SK-N-SH (cell line): ENCODE measurements at regions of chr1 and their contacts with region 1.

Region 1: GRCh38 chr1:20472860-20473711 is 12.9 kb downstream of the CAMK2N1 start:
- DNase-seq: peak; percentile 78
- H3K4me3 ChIP-seq: no peak overlapping the region
- H3K27ac ChIP-seq: peak overlapping the region in 1 of 2 experiments; percentile 74; a peak in 2 of 4 replicates
- H3K4me1 ChIP-seq: peaks cover 0 to 38% of the 10 kb centered on the region in 2 experiments; a peak in 2 of 4 replicates
- H3K27me3 ChIP-seq: no peaks in the 10 kb centered on the region
- CTCF ChIP-seq: no peak
- EP300 ChIP-seq: no peak
- RAD21 ChIP-seq: no peak

Region 2: GRCh38 chr1:20348326-20348915 is 124.7 kb before region 1 on chr1:
- CTCF ChIA-PET with region 1: no interaction called
- POLR2A ChIA-PET with region 1: no interaction called
- DNase-seq: no peak
- H3K4me3 ChIP-seq: no peak overlapping the region
- H3K27ac ChIP-seq: no peak overlapping the region
- H3K4me1 ChIP-seq: peaks cover 0 to 9% of the 10 kb centered on the region in 2 experiments; a peak in 1 of 4 replicates
- H3K27me3 ChIP-seq: no peaks in the 10 kb centered on the region; the same call in 1 of the 2 replicates
- CTCF ChIP-seq: no peak
- EP300 ChIP-seq: no peak
- RAD21 ChIP-seq: no peak

Region 3: DNA sequence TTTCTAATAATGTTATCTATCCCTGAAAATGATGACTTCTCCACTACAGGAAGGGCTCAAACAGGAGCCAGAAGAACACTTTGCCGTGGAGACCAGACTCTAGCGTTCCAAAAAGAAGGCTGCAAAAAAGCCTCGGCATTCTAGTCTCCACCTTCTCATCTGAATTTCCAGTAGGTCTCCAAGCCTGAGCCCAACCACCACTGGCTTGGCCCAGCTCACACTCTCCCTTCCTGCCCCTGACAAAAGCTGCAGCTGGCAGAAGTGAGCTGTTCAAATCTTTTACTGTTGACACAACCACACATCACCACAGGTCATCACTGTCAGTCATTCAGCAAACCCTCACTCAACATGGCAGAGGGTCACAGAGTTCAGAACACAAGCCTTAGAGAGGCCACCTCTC is 56.4 kb before region 1 on chr1:
- CTCF ChIA-PET with region 1: no interaction called
- POLR2A ChIA-PET with region 1: no interaction called
- DNase-seq: no peak
- H3K4me3 ChIP-seq: no peak overlapping the region
- H3K27ac ChIP-seq: no peak overlapping the region
- H3K4me1 ChIP-seq: peaks cover 2 to 8% of the 10 kb centered on the region in 2 experiments; a peak in 3 of 4 replicates
- H3K27me3 ChIP-seq: no peaks in the 10 kb centered on the region
- CTCF ChIP-seq: no peak
- EP300 ChIP-seq: no peak
- RAD21 ChIP-seq: no peak

Region 4: GRCh38 chr1:20485527-20486456 is 12.7 kb after region 1 on chr1 and contains the start of gene CAMK2N1:
- CTCF ChIA-PET with region 1: interaction called, 19 read pairs
- POLR2A ChIA-PET with region 1: interaction called, 14 read pairs
- DNase-seq: peak; percentile 89
- H3K4me3 ChIP-seq: peak within 1 kb of the TSS; percentile 68 to 74
- H3K27ac ChIP-seq: peak within 1 kb of the TSS; percentile 56 to 88
- H3K4me1 ChIP-seq: peaks cover 0 to 25% of the 10 kb centered on the region in 2 experiments; a peak in 2 of 4 replicates
- H3K27me3 ChIP-seq: 0 out of 2 replicates have a peak, but pooled peaks cover 3% of the 10 kb centered on the region
- CTCF ChIP-seq: no peak
- EP300 ChIP-seq: no peak
- RAD21 ChIP-seq: no peak
- polyA plus RNA-seq, gene CAMK2N1: 2.8 and 5.3 TPM in 2 replicates

Region 5: DNA sequence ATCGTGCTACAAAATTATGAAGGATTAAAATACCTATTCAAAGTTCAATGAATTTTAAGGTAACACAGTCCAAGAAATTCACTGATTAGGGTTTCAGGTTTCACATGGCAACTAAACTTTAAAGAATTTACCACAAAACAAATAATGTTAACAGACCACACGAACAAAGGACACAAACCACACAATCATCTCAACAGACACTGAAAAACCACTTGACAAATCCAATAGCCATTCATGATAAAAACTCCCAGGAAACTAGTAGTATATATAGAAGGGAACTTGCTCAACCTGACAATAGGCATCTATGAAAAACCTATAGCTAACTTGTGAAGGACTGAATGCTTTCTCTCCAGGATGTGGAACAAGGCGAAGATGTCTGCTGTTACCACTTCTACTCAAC is 280.5 kb after region 1 on chr1:
- CTCF ChIA-PET with region 1: no interaction called
- POLR2A ChIA-PET with region 1: no interaction called
- DNase-seq: no peak
- H3K4me3 ChIP-seq: no peak overlapping the region
- H3K27ac ChIP-seq: peak overlapping the region in 1 of 2 experiments; percentile 30; a peak in 2 of 4 replicates
- H3K4me1 ChIP-seq: 0 out of 4 replicates have a peak, but pooled peaks cover 0 to 5% of the 10 kb centered on the region in 2 experiments
- H3K27me3 ChIP-seq: no peaks in the 10 kb centered on the region
- CTCF ChIP-seq: no peak
- EP300 ChIP-seq: no peak
- RAD21 ChIP-seq: no peak